ENCODE measurements at regions of chr2 and their contacts with region 1.

Region 1: GRCh38 chr2:155404433-155405002 is 706.0 kb downstream of the KCNJ3 start:
- DNase-seq: no peak

Region 2: GRCh38 chr2:155766342-155767115 is 362.0 kb after region 1 on chr2:
- in situ Hi-C with region 1: loop called (anchors 10 kb)
- DNase-seq: no peak